Breast epithelium (tissue), 4 donors: ENCODE measurements at regions of chr13 and their contacts with region 1.

Region 1: GRCh38 chr13:19117913-19118739 is 63.5 kb downstream of the TUBA3C start:
- DNase-seq: no peak
- H3K4me3 ChIP-seq: no peak overlapping the region
- H3K27ac ChIP-seq: no peak overlapping the region
- H3K4me1 ChIP-seq: no peaks in the 10 kb centered on the region
- H3K27me3 ChIP-seq: no peaks in the 10 kb centered on the region
- CTCF ChIP-seq: no peak
- POLR2A ChIP-seq: no peak

Region 2: DNA sequence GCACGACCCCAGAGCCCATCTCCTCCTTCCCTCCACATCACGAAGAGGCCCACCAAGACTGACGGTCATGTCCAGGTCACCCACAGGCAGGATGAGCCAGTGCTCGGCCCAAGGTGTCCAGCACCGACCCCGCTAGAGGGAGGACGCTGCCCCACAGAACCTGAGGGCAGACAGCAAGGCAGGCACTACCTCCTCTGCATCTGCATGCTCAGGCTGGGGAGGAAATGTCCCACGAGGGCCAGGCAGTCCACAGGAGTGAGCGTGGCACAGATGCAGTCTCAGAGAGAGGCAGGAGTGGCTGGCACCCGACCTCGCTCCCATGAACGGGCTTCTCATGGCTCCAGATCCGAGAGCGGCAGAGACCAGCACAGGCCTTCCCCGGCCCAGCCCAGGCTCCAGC is 69.7 kb before region 1 on chr13:
- intact Hi-C with region 1: no loop called
- DNase-seq: no peak
- H3K4me3 ChIP-seq: no peak overlapping the region
- H3K27ac ChIP-seq: no peak overlapping the region
- H3K4me1 ChIP-seq: no peaks in the 10 kb centered on the region
- H3K27me3 ChIP-seq: no peaks in the 10 kb centered on the region
- CTCF ChIP-seq: no peak
- POLR2A ChIP-seq: no peak

Region 3: GRCh38 chr13:19252381-19252780 is 134.3 kb after region 1 on chr13:
- intact Hi-C with region 1: loop called (anchors 5 kb)
- DNase-seq: no peak
- H3K4me3 ChIP-seq: no peak overlapping the region
- H3K27ac ChIP-seq: no peak overlapping the region
- H3K4me1 ChIP-seq: no peaks in the 10 kb centered on the region
- H3K27me3 ChIP-seq: no peaks in the 10 kb centered on the region
- CTCF ChIP-seq: no peak
- POLR2A ChIP-seq: no peak